PC-9 (cell line): ENCODE measurements at regions of chr12 and their contacts with region 1.

Region 1: GRCh38 chr12:26274441-26275312 is 79.3 kb downstream of the SSPN start:
- DNase-seq: peak; percentile 88 to 99
- H3K4me3 ChIP-seq: peak overlapping the region; percentile 16; the same call in 1 of the 2 replicates
- H3K27ac ChIP-seq: peak overlapping the region; percentile 98
- H3K4me1 ChIP-seq: peaks cover 67% of the 10 kb centered on the region
- H3K27me3 ChIP-seq: no peaks in the 10 kb centered on the region
- CTCF ChIP-seq: peak; percentile 66

Region 2: DNA sequence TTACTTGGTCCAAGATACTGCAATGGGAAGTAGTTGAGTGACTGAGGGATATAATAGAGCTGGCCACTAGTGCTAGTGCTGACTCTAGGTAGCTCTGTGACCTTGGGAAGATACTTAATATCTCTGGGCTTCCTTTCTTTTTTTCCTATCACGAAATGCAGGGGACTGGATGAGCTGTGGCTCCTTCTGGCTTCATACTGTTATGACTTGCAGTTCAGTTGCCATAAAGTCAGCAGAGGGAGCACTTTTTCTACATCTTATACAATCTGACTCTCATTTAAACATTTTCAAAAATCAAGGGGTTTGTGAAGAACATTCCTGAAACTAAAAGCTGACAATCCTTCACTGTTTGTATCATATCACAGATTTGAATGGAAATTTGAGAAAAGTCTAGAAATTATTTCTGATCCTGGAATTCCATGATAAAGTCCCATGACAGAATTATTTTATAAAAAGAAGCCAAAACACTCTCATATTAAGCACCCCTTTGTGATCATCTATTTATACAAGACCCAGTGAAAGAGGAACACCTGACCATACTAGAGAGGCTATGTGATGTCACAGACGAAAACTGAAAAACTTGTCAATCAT is 155.2 kb before region 1 on chr12:
- CTCF ChIA-PET with region 1: interaction called, 12 read pairs
- POLR2A ChIA-PET with region 1: interaction called, 5 read pairs
- intact Hi-C with region 1: loop called (anchors 1 kb)
- DNase-seq: peak in 1 of 2 experiments; percentile 52
- H3K4me3 ChIP-seq: peak overlapping the region; percentile 87; the same call in 1 of the 2 replicates
- H3K27ac ChIP-seq: peak overlapping the region; percentile 97
- H3K4me1 ChIP-seq: peaks cover 61% of the 10 kb centered on the region
- H3K27me3 ChIP-seq: no peaks in the 10 kb centered on the region
- CTCF ChIP-seq: peak; percentile 71

Region 3: DNA sequence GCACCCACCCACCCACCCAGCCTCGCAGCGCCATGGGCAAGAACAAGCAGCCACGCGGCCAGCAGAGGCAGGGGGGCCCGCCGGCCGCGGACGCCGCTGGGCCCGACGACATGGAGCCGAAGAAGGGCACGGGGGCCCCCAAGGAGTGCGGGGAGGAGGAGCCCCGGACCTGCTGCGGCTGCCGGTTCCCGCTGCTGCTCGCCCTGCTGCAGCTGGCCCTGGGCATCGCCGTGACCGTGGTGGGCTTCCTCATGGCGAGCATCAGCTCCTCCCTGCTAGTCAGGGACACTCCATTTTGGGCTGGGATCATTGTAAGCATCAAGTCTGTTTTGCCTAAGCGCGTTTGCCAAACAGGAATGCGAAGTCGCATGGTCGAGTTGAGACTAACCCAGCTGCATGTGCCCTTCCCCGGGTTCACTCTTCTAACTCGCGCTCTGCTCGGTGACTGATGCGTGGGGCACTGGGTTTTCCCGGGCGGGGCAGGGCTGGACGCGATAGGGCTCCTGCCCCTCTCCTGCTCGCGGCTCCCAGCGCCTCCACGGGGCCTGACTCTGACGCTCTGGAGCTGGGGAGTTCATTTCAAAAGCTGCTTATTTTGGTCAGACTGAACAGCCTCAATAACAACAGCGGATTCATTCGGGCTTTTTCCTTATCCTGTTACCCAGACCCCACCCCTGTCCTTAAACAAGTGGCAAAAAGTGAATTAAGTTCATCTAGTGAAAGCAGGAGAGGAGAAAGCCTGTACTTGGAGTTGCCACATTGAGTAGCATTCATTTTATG is 78.8 kb before region 1 on chr12:
- CTCF ChIA-PET with region 1: no interaction called
- POLR2A ChIA-PET with region 1: no interaction called
- intact Hi-C with region 1: loop called (anchors 1 kb)
- DNase-seq: peak in 1 of 2 experiments; percentile 46
- H3K4me3 ChIP-seq: peak overlapping the region; percentile 79
- H3K27ac ChIP-seq: peak overlapping the region; percentile 38
- H3K4me1 ChIP-seq: peaks cover 34% of the 10 kb centered on the region
- H3K27me3 ChIP-seq: no peaks in the 10 kb centered on the region
- CTCF ChIP-seq: no peak

Region 4: GRCh38 chr12:26246483-26247111 is 28.1 kb before region 1 on chr12:
- CTCF ChIA-PET with region 1: interaction called, 6 read pairs
- POLR2A ChIA-PET with region 1: interaction called, 8 read pairs
- intact Hi-C with region 1: loop called (anchors 1 kb)
- DNase-seq: peak; percentile 95 to 99
- H3K4me3 ChIP-seq: peak overlapping the region; percentile 10; the same call in 1 of the 2 replicates
- H3K27ac ChIP-seq: peak overlapping the region; percentile 96
- H3K4me1 ChIP-seq: peaks cover 71% of the 10 kb centered on the region
- H3K27me3 ChIP-seq: no peaks in the 10 kb centered on the region
- CTCF ChIP-seq: no peak

Region 5: GRCh38 chr12:26402648-26403047 is 128.0 kb after region 1 on chr12:
- CTCF ChIA-PET with region 1: no interaction called
- POLR2A ChIA-PET with region 1: no interaction called
- intact Hi-C with region 1: loop called (anchors 1 kb)
- DNase-seq: peak; percentile 77 to 93
- H3K4me3 ChIP-seq: no peak overlapping the region
- H3K27ac ChIP-seq: peak overlapping the region; percentile 44
- H3K4me1 ChIP-seq: peaks cover 22% of the 10 kb centered on the region
- H3K27me3 ChIP-seq: no peaks in the 10 kb centered on the region
- CTCF ChIP-seq: peak; percentile 55

Region 6: DNA sequence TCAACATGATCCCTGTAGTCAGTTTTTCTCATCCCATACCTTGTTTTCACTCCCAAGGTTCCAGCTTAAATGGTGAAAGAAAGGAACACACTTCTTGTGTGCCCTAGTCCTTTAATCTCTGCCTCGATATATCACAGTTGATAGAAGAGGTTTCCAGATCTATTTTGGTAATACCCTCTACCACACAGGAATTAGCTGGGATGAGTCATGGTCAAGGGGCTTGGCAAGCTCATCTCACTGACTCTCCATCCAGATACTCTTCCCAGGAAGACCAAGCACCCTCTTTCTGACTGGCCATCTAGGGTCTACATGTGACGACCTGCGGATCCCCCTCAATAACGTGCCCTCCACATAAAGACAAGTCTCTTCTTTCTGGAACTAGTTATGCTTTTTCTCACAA is 280.5 kb after region 1 on chr12:
- CTCF ChIA-PET with region 1: no interaction called
- POLR2A ChIA-PET with region 1: no interaction called
- intact Hi-C with region 1: no loop called
- DNase-seq: no peak
- H3K4me3 ChIP-seq: no peak overlapping the region
- H3K27ac ChIP-seq: no peak overlapping the region
- H3K4me1 ChIP-seq: no peaks in the 10 kb centered on the region
- H3K27me3 ChIP-seq: no peaks in the 10 kb centered on the region
- CTCF ChIP-seq: no peak

Region 7: DNA sequence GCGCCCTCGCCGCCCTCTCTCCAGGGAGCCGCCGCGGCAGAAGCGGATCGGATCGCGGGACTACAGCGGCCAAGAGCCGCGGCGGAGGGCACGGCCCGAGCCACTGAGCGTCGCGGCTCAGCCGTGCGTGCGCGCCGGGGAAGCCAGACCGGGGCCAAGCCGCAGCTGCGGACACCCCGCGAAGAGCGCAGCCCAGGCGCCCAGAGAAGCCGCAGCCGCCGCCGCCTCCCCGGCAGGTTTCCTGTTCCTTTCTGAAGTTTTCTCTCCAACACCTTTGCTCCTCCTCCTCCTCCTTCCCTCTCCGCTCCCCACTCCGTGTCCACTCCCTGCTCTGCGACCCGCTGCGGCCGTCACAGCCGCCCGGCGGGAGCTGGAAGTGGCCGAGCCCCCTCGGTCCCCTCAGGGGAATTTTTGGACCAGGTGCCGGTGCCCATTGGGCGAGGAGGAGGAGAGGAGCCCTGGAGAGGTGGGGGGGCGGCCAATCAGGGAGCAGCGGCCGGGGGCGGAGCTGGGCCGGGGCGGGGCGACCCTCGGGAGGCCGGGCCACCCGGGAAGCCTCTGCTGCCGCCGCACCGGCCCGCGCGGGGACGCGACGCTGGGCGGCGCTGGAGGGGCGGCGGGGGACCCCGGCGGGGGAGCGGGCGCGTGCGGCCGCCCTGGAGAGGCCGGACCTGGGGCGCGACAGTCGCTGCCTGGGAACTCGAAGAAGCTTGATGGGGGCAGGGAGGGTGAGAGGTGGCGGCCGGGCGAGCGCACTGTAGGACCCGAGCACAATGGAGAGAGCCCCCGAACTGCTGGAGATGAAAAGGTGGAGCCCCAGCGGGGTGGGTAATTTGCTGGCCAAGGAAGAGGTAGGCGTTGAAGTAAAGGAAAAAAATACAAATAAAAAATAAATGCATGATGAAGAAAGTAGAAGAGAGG is 558.4 kb after region 1 on chr12 and contains the start of gene ITPR2:
- CTCF ChIA-PET with region 1: no interaction called
- POLR2A ChIA-PET with region 1: interaction called, 6 read pairs
- intact Hi-C with region 1: loop called (anchors 10 kb)
- DNase-seq: peak; percentile 80 to 99
- H3K4me3 ChIP-seq: peak within 1 kb of the TSS; percentile 83
- H3K27ac ChIP-seq: peak within 1 kb of the TSS; percentile 61
- H3K4me1 ChIP-seq: peaks cover 14% of the 10 kb centered on the region
- H3K27me3 ChIP-seq: no peaks in the 10 kb centered on the region
- CTCF ChIP-seq: peak; percentile 51; the same call in 1 of the 2 replicates
- total RNA-seq, gene ITPR2: 16.2 and 26.0 TPM in 2 replicates